ENCODE measurements at regions of chr1 and their contacts with region 1.

Region 1: DNA sequence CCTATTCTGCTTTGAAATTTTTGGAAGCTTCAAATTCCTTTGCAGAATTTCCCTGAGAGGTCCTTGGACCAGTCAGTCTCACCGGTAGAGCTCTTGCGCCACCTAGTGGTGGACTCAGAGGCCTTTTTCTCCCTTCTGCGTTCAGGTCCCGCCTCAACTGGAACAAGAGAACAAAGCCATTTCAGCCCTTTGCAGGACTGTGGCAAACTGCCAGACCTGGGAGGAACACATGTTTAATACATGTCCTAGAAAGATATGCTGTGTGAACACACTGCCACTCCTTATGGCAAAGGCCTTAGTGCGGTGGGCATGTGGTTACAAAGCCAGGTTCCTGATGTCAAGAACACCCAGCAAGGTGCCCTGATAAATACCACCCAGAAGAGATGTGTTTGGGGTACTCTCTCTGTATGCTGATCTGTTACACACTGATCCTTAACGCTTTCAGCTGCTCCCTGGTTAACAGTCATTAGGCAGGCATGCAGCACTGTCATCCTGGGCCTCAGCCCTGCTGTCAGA is 82.2 kb upstream of the SSX2IP start:
- DNase-seq: peak; percentile 78
- ATAC-seq: peak; percentile 94
- H3K4me3 ChIP-seq: no peak overlapping the region
- H3K27ac ChIP-seq: no peak overlapping the region
- H3K4me1 ChIP-seq: no peaks in the 10 kb centered on the region
- H3K27me3 ChIP-seq: peaks cover 2% of the 10 kb centered on the region
- CTCF ChIP-seq: peak; percentile 94
- POLR2A ChIP-seq: no peak
- RAD21 ChIP-seq: peak; percentile 94

Region 2: GRCh38 chr1:83905315-83905907 is 867.1 kb before region 1 on chr1:
- CTCF ChIA-PET with region 1: no interaction called
- POLR2A ChIA-PET with region 1: no interaction called
- dilution Hi-C with region 1: no loop called
- in situ Hi-C with region 1: no loop called
- intact Hi-C with region 1: loop called (anchors 1 kb)
- DNase-seq: peak; percentile 22
- ATAC-seq: no peak
- H3K4me3 ChIP-seq: no peak overlapping the region
- H3K27ac ChIP-seq: no peak overlapping the region
- H3K4me1 ChIP-seq: peaks cover 2% of the 10 kb centered on the region; the same call in 1 of the 2 replicates
- H3K27me3 ChIP-seq: no peaks in the 10 kb centered on the region
- CTCF ChIP-seq: peak; percentile 60
- POLR2A ChIP-seq: no peak
- RAD21 ChIP-seq: peak; percentile 48; the same call in 1 of the 2 replicates

Region 3: DNA sequence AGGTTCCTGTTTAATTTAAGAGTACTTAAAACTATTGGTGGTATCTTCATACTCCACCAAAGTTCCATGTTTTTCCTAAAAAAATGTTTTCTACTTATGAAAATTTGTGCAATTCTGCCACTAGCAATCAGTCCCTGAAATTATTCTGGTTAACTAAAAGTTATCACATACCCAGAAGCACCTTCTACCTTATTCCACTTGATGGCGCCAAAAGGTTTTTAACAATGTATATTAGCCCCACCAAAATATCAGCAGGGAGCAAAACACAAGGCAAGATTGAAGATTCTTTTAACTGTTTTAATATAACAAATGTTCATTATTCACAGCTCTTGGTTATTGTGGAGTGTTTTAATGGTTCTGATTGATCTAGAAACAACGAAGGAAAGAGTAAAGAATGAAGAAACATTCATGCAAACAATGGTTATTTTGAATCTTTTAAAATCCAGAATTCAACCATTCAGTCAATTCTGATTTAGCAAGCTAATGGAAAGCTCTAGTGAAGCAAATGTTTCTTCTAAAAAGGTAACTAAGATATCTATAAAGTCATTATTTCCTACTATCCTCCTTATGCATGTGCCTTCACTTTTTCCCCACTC is 840.7 kb before region 1 on chr1:
- CTCF ChIA-PET with region 1: no interaction called
- POLR2A ChIA-PET with region 1: no interaction called
- dilution Hi-C with region 1: no loop called
- in situ Hi-C with region 1: loop called (anchors 10 kb)
- intact Hi-C with region 1: loop called (anchors 5 kb)
- DNase-seq: peak; percentile 60
- ATAC-seq: peak; percentile 76
- H3K4me3 ChIP-seq: no peak overlapping the region
- H3K27ac ChIP-seq: no peak overlapping the region
- H3K4me1 ChIP-seq: peaks cover 4% of the 10 kb centered on the region; the same call in 1 of the 2 replicates
- H3K27me3 ChIP-seq: no peaks in the 10 kb centered on the region
- CTCF ChIP-seq: peak; percentile 84
- POLR2A ChIP-seq: no peak
- RAD21 ChIP-seq: peak; percentile 84

Region 4: GRCh38 chr1:84143796-84144565 is 628.5 kb before region 1 on chr1 and contains the start of gene PRKACB:
- CTCF ChIA-PET with region 1: no interaction called
- POLR2A ChIA-PET with region 1: no interaction called
- dilution Hi-C with region 1: no loop called
- in situ Hi-C with region 1: loop called (anchors 10 kb)
- intact Hi-C with region 1: loop called (anchors 5 kb)
- DNase-seq: peak; percentile 62
- ATAC-seq: peak; percentile 68
- H3K4me3 ChIP-seq: no peak within 1 kb of the TSS
- H3K27ac ChIP-seq: no peak within 1 kb of the TSS
- H3K4me1 ChIP-seq: peaks cover 5% of the 10 kb centered on the region
- H3K27me3 ChIP-seq: no peaks in the 10 kb centered on the region
- CTCF ChIP-seq: no peak
- POLR2A ChIP-seq: no peak
- RAD21 ChIP-seq: no peak
- total RNA-seq, gene PRKACB: 8.2 and 14.2 TPM in 2 replicates

Region 5: GRCh38 chr1:84442256-84442655 is 330.2 kb before region 1 on chr1:
- CTCF ChIA-PET with region 1: interaction called, 4 read pairs
- POLR2A ChIA-PET with region 1: no interaction called
- dilution Hi-C with region 1: no loop called
- in situ Hi-C with region 1: loop called (anchors 25 kb)
- intact Hi-C with region 1: loop called (anchors 1 kb)
- DNase-seq: peak; percentile 94
- ATAC-seq: peak; percentile 96
- H3K4me3 ChIP-seq: no peak overlapping the region
- H3K27ac ChIP-seq: no peak overlapping the region
- H3K4me1 ChIP-seq: 0 out of 2 replicates have a peak, but pooled peaks cover 2% of the 10 kb centered on the region
- H3K27me3 ChIP-seq: no peaks in the 10 kb centered on the region
- CTCF ChIP-seq: peak; percentile 82
- POLR2A ChIP-seq: no peak
- RAD21 ChIP-seq: peak; percentile 89

Region 6: GRCh38 chr1:84834419-84835064 is 62.1 kb after region 1 on chr1:
- CTCF ChIA-PET with region 1: no interaction called
- POLR2A ChIA-PET with region 1: no interaction called
- dilution Hi-C with region 1: no loop called
- in situ Hi-C with region 1: no loop called
- intact Hi-C with region 1: no loop called
- DNase-seq: peak; percentile 72
- ATAC-seq: peak; percentile 66
- H3K4me3 ChIP-seq: no peak overlapping the region
- H3K27ac ChIP-seq: no peak overlapping the region
- H3K4me1 ChIP-seq: peaks cover 2% of the 10 kb centered on the region; the same call in 1 of the 2 replicates
- H3K27me3 ChIP-seq: peaks cover 11% of the 10 kb centered on the region
- CTCF ChIP-seq: no peak
- POLR2A ChIP-seq: no peak
- RAD21 ChIP-seq: no peak

Region 7: DNA sequence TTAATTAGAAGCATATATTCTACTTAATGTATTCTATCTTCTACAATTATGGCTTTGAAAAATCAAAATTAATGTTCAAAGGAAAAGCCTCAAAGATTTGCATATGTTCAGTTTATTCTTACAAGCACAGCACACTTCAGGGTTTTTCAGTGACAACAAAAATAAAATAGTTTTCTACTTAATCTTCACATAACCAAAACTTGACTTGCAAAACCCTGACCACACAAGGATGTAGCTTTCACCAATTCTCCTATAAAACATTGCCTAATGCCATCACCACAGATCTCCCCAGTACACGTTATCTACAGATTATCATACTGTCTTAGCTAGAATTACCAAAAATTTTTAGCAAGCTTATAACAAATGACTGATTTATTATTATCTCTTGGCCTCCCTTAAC is 97.2 kb after region 1 on chr1:
- CTCF ChIA-PET with region 1: no interaction called
- POLR2A ChIA-PET with region 1: no interaction called
- dilution Hi-C with region 1: no loop called
- in situ Hi-C with region 1: no loop called
- intact Hi-C with region 1: no loop called
- DNase-seq: peak; percentile 39
- ATAC-seq: no peak
- H3K4me3 ChIP-seq: no peak overlapping the region
- H3K27ac ChIP-seq: no peak overlapping the region
- H3K4me1 ChIP-seq: peaks cover 2% of the 10 kb centered on the region
- H3K27me3 ChIP-seq: peaks cover 1% of the 10 kb centered on the region; the same call in 1 of the 2 replicates
- CTCF ChIP-seq: no peak
- POLR2A ChIP-seq: no peak
- RAD21 ChIP-seq: no peak

Region 8: GRCh38 chr1:84936116-84936810 is 163.8 kb after region 1 on chr1:
- CTCF ChIA-PET with region 1: interaction called, 12 read pairs
- POLR2A ChIA-PET with region 1: no interaction called
- dilution Hi-C with region 1: no loop called
- in situ Hi-C with region 1: loop called (anchors 5 kb)
- intact Hi-C with region 1: loop called (anchors 1 kb)
- DNase-seq: peak; percentile 72
- ATAC-seq: peak; percentile 92
- H3K4me3 ChIP-seq: no peak overlapping the region
- H3K27ac ChIP-seq: no peak overlapping the region
- H3K4me1 ChIP-seq: peaks cover 2% of the 10 kb centered on the region; the same call in 1 of the 2 replicates
- H3K27me3 ChIP-seq: peaks cover 12% of the 10 kb centered on the region
- CTCF ChIP-seq: peak; percentile 95
- POLR2A ChIP-seq: no peak
- RAD21 ChIP-seq: peak; percentile 96